Endothelial cell of umbilical vein (primary cell): ENCODE measurements at regions of chr19 and their contacts with region 1.

Region 1: GRCh38 chr19:55216461-55217198 is 7.3 kb upstream of the PTPRH start:
- DNase-seq: peak; percentile 97
- H3K4me3 ChIP-seq: peak overlapping the region in 1 of 3 experiments; percentile 3
- H3K27ac ChIP-seq: peak overlapping the region; percentile 65
- H3K4me1 ChIP-seq: peaks cover 9% of the 10 kb centered on the region
- H3K27me3 ChIP-seq: no peaks in the 10 kb centered on the region
- CTCF ChIP-seq: no peak
- POLR2A ChIP-seq: no peak

Region 2: DNA sequence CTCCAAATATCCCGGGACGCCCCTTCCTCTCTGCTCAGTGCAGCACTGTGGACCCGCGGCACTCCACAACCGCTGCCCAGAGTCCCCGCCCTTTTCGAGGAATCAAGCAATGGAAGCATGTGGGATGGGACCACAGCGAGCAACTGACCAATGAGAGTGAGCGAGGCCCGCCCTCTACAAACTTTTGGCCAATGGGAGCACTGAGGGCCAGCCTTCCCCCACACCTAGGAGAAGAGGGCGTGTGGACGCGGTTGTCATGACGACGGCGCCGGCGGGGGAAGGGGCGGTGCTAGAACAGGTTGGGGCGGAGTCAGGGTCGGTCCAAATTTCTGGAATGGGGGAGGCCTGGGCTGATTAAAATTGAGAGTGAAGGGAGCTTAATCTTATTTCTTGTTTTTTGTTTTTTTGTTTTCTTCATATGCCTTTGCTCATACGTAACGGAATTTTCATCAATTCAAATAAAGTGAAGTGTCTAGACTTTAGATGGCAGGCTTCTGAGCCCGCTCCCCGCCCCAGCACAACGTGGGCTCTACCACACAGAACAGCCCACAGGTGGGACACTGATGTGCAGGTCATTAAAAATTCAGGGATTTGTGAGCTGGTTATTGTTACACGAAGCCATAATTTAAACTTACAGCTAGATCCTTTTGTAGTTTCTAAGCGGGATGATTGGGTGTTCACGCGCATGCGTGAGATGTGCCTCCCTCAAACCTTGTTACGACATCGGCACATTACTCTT is 49.9 kb before region 1 on chr19 and contains the start of gene DNAAF3:
- CTCF ChIA-PET with region 1: interaction called, 3 read pairs
- POLR2A ChIA-PET with region 1: no interaction called
- dilution Hi-C with region 1: no loop called
- intact Hi-C with region 1: loop called (anchors 5 kb)
- DNase-seq: peak; percentile 97
- H3K4me3 ChIP-seq: peak within 1 kb of the TSS in 2 of 3 experiments; percentile 25 to 52
- H3K27ac ChIP-seq: no peak within 1 kb of the TSS
- H3K4me1 ChIP-seq: no peaks in the 10 kb centered on the region
- H3K27me3 ChIP-seq: peaks cover 8 to 15% of the 10 kb centered on the region in 2 experiments
- CTCF ChIP-seq: no peak
- POLR2A ChIP-seq: no peak
- total RNA-seq, gene DNAAF3: 0.62 TPM in 1 of 2 replicates, not detected in the other

Region 3: DNA sequence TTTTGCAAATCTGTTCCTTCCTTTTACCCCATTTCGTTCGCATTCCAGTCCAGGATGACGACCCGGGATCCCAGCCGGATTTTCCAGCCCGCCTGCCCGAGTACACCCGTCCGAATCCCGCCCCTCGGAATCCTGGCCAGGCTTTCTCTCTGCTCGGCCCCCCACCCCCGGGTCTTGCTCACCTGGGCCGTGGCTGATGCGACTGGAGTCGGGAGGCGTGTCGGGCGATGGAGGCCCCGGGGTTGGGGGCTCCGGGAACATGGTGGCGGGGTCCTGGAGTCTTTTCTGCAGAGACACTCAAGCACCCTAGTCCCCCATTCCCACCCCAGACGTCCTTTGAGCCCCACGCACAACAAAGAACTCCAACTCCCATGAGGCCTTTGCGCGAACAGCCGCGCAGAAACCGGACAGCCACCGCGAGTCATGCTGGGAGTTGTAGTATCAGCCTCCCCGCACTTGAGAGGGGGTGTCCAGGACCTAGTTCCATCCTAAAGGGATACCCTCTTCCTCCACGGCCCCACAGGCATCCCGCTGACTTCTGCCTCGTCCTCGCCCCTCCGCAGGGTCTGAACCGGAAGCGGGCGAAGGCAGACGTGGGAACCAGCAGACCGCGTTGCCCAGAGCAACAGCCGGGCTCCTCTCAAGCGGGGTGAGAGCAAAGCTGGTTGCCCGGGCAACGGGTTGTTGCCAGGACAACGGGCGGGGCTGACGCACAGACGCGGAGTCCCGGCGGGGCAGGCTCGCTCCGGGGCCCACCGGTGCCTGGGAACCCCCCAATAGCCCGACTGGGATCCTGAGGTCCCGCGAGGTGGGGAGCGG is 37.6 kb before region 1 on chr19:
- CTCF ChIA-PET with region 1: no interaction called
- POLR2A ChIA-PET with region 1: no interaction called
- dilution Hi-C with region 1: no loop called
- intact Hi-C with region 1: no loop called
- DNase-seq: peak; percentile 40
- H3K4me3 ChIP-seq: no peak overlapping the region
- H3K27ac ChIP-seq: no peak overlapping the region
- H3K4me1 ChIP-seq: no peaks in the 10 kb centered on the region
- H3K27me3 ChIP-seq: peaks cover 8 to 23% of the 10 kb centered on the region in 2 experiments
- CTCF ChIP-seq: no peak
- POLR2A ChIP-seq: no peak